Prostate gland (tissue), 2 donors: ENCODE measurements at regions of chr5 and their contacts with region 1.

Region 1: DNA sequence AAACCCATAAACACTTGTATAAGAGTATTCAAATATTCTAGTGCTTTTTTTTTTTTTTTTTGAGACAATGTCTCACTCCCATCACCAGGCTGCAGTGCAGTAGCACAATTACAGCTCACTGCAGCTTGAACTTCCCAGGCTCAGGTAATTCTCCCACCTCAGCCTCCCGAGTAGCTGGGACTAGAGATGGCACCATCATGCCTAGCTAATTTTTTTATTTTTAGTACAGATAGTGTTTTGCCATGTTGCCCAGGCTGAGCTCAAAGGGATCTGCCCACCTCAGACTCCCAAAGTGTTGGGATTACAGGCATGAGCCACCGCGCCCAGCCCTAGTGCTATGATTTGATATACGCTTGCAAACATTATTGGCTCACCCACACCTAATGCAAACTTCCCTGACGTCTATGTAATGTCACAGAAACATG is 11.8 kb downstream of the IL6ST start:
- DNase-seq: no peak
- H3K4me3 ChIP-seq: no peak overlapping the region
- H3K27ac ChIP-seq: no peak overlapping the region
- H3K4me1 ChIP-seq: peaks cover 3% of the 10 kb centered on the region
- H3K27me3 ChIP-seq: no peaks in the 10 kb centered on the region
- CTCF ChIP-seq: peak in 3 of 4 experiments; percentile 10 to 33 (median 33)
- POLR2A ChIP-seq: no peak

Region 2: GRCh38 chr5:55456216-55456895 is 526.6 kb before region 1 on chr5:
- intact Hi-C with region 1: no loop called
- DNase-seq: no peak
- H3K4me3 ChIP-seq: no peak overlapping the region
- H3K27ac ChIP-seq: no peak overlapping the region
- H3K4me1 ChIP-seq: peaks cover 4% of the 10 kb centered on the region
- H3K27me3 ChIP-seq: no peaks in the 10 kb centered on the region
- CTCF ChIP-seq: no peak
- POLR2A ChIP-seq: no peak

Region 3: GRCh38 chr5:55711968-55712859 is 270.8 kb before region 1 on chr5 and contains the start of gene SLC38A9:
- intact Hi-C with region 1: loop called (anchors 10 kb)
- DNase-seq: peak; percentile 94
- H3K4me3 ChIP-seq: peak within 1 kb of the TSS; percentile 52 to 81
- H3K27ac ChIP-seq: peak within 1 kb of the TSS; percentile 12 to 62
- H3K4me1 ChIP-seq: peaks cover 7% of the 10 kb centered on the region
- H3K27me3 ChIP-seq: no peaks in the 10 kb centered on the region
- CTCF ChIP-seq: peak in 2 of 4 experiments; percentile 12 to 19
- POLR2A ChIP-seq: peak; percentile 40
- total RNA-seq, gene SLC38A9: 14.8 to 20.8 TPM

Region 4: GRCh38 chr5:55903121-55903701 is 79.8 kb before region 1 on chr5:
- intact Hi-C with region 1: no loop called
- DNase-seq: no peak
- H3K4me3 ChIP-seq: no peak overlapping the region
- H3K27ac ChIP-seq: no peak overlapping the region
- H3K4me1 ChIP-seq: no peaks in the 10 kb centered on the region
- H3K27me3 ChIP-seq: no peaks in the 10 kb centered on the region
- CTCF ChIP-seq: no peak
- POLR2A ChIP-seq: no peak